ENCODE measurements at regions of chr2 and their contacts with region 1.

Region 1: GRCh38 chr2:134460583-134460998 is 206.7 kb downstream of the MGAT5 start:
- DNase-seq: peak; percentile 60
- H3K4me3 ChIP-seq: no peak overlapping the region
- H3K27ac ChIP-seq: no peak overlapping the region
- H3K4me1 ChIP-seq: peaks cover 16% of the 10 kb centered on the region
- H3K27me3 ChIP-seq: no peaks in the 10 kb centered on the region
- CTCF ChIP-seq: peak; percentile 62 to 87

Region 2: GRCh38 chr2:134420259-134420658 is 40.3 kb before region 1 on chr2:
- CTCF ChIA-PET with region 1: no interaction called
- dilution Hi-C with region 1: no loop called
- in situ Hi-C with region 1: no loop called
- intact Hi-C with region 1: no loop called
- DNase-seq: no peak
- H3K4me3 ChIP-seq: no peak overlapping the region
- H3K27ac ChIP-seq: no peak overlapping the region
- H3K4me1 ChIP-seq: peaks cover 3% of the 10 kb centered on the region
- H3K27me3 ChIP-seq: no peaks in the 10 kb centered on the region
- CTCF ChIP-seq: no peak

Region 3: DNA sequence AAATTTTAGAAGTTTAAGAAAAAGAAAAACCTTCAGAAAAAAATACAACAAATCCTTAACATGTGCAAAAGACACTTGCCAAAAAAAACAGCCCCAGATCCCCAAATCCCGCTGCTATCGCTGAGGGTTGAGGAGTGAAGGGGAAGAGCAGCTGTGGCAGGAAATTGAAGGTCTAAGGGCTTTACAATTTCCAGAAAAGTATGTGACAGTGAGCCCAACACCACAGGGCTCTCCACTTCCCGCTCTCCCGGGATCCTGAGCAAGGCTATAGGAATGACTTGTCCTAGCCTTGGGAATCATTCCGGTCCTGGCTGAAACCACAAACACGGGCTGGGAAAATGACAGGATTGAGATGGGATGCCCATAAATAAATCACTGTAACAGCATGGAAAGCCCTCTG is 66.8 kb after region 1 on chr2:
- CTCF ChIA-PET with region 1: no interaction called
- dilution Hi-C with region 1: no loop called
- in situ Hi-C with region 1: no loop called
- intact Hi-C with region 1: no loop called
- DNase-seq: no peak
- H3K4me3 ChIP-seq: no peak overlapping the region
- H3K27ac ChIP-seq: no peak overlapping the region
- H3K4me1 ChIP-seq: no peaks in the 10 kb centered on the region
- H3K27me3 ChIP-seq: no peaks in the 10 kb centered on the region
- CTCF ChIP-seq: no peak

Region 4: GRCh38 chr2:134539981-134540380 is 79.4 kb after region 1 on chr2:
- CTCF ChIA-PET with region 1: no interaction called
- dilution Hi-C with region 1: no loop called
- in situ Hi-C with region 1: no loop called
- intact Hi-C with region 1: no loop called
- DNase-seq: no peak
- H3K4me3 ChIP-seq: no peak overlapping the region
- H3K27ac ChIP-seq: no peak overlapping the region
- H3K4me1 ChIP-seq: no peaks in the 10 kb centered on the region
- H3K27me3 ChIP-seq: no peaks in the 10 kb centered on the region
- CTCF ChIP-seq: no peak

Region 5: GRCh38 chr2:134657637-134658250 is 197.2 kb after region 1 on chr2:
- CTCF ChIA-PET with region 1: no interaction called
- dilution Hi-C with region 1: no loop called
- in situ Hi-C with region 1: no loop called
- intact Hi-C with region 1: loop called (anchors 5 kb)
- DNase-seq: no peak
- H3K4me3 ChIP-seq: no peak overlapping the region
- H3K27ac ChIP-seq: no peak overlapping the region
- H3K4me1 ChIP-seq: no peaks in the 10 kb centered on the region
- H3K27me3 ChIP-seq: no peaks in the 10 kb centered on the region
- CTCF ChIP-seq: peak; percentile 51 to 65

Region 6: GRCh38 chr2:134782792-134783191 is 322.2 kb after region 1 on chr2:
- CTCF ChIA-PET with region 1: no interaction called
- dilution Hi-C with region 1: no loop called
- in situ Hi-C with region 1: no loop called
- intact Hi-C with region 1: loop called (anchors 10 kb)
- DNase-seq: peak; percentile 57
- H3K4me3 ChIP-seq: no peak overlapping the region
- H3K27ac ChIP-seq: no peak overlapping the region
- H3K4me1 ChIP-seq: no peaks in the 10 kb centered on the region
- H3K27me3 ChIP-seq: no peaks in the 10 kb centered on the region
- CTCF ChIP-seq: peak; percentile 39 to 49

Measured in mammary epithelial cell (primary cell).